Naive thymus-derived CD8-positive, alpha-beta T cell (primary cell): ENCODE measurements at regions of chr17 and their contacts with region 1.

Region 1: DNA sequence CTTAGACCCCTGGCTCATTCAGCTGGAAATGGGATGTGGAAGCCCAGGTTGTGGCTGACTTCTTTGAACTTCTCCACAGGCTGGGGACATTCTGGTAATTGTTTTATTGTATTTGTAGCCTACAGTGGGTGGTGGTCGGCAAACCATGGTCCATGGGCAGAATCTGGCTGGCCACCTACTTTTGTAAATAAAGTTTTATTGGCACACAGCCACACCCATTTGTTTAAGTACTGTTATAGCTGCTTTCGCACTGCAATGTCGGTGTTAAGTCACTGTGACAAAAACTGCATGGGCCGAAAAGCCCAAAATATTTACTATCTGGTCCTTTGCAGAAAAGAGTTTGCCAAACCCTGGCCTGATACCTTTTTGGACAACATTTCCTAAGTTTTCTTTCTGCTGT is 86.2 kb downstream of the NTN1 start:
- DNase-seq: no peak
- ATAC-seq: no peak
- H3K4me3 Mint-ChIP-seq: no peak overlapping the region
- H3K27ac Mint-ChIP-seq: no peak overlapping the region
- H3K4me1 Mint-ChIP-seq: no peaks in the 10 kb centered on the region
- H3K27me3 Mint-ChIP-seq: peaks cover 0 to 3% (median 1%) of the 10 kb centered on the region in 5 donors

Region 2: GRCh38 chr17:9132944-9133575 is 25.5 kb after region 1 on chr17:
- POLR2A ChIA-PET with region 1: interaction called, 11 read pairs
- DNase-seq: no peak
- ATAC-seq: no peak
- H3K4me3 Mint-ChIP-seq: no peak overlapping the region
- H3K27ac Mint-ChIP-seq: no peak overlapping the region
- H3K4me1 Mint-ChIP-seq: peaks cover 0 to 2% (median 0%) of the 10 kb centered on the region in 4 donors
- H3K27me3 Mint-ChIP-seq: peaks cover 0 to 11% (median 2%) of the 10 kb centered on the region in 5 donors

Region 3: GRCh38 chr17:9195961-9196716 is 88.6 kb after region 1 on chr17:
- POLR2A ChIA-PET with region 1: no interaction called
- DNase-seq: peak in 1 of 10 donors; percentile 40
- ATAC-seq: no peak
- H3K4me3 Mint-ChIP-seq: no peak overlapping the region
- H3K27ac Mint-ChIP-seq: peak overlapping the region in 1 of 10 donors; percentile 27
- H3K4me1 Mint-ChIP-seq: peaks cover 0 to 16% (median 4%) of the 10 kb centered on the region in 4 donors
- H3K27me3 Mint-ChIP-seq: peaks cover 0 to 2% (median 0%) of the 10 kb centered on the region in 5 donors